ENCODE measurements at regions of chr6 and their contacts with region 1.

Region 1: GRCh38 chr6:118881440-118882313 is 12.3 kb upstream of the ASF1A start:
- DNase-seq: no peak
- ATAC-seq: no peak
- H3K4me3 ChIP-seq: no peak overlapping the region
- H3K27ac ChIP-seq: no peak overlapping the region
- H3K4me1 ChIP-seq: peaks cover 0 to 4% (median 0%) of the 10 kb centered on the region in 3 donors
- H3K27me3 ChIP-seq: no peaks in the 10 kb centered on the region
- CTCF ChIP-seq: no peak

Region 2: GRCh38 chr6:118660218-118660569 is 221.5 kb before region 1 on chr6:
- intact Hi-C with region 1: loop called in 1 of 3 experiments (anchors 10 kb)
- DNase-seq: peak in 1 of 6 donors; percentile 17
- ATAC-seq: no peak
- H3K4me3 ChIP-seq: no peak overlapping the region
- H3K27ac ChIP-seq: no peak overlapping the region
- H3K4me1 ChIP-seq: no peaks in the 10 kb centered on the region
- H3K27me3 ChIP-seq: no peaks in the 10 kb centered on the region
- CTCF ChIP-seq: no peak

Region 3: GRCh38 chr6:118939683-118940082 is 58.0 kb after region 1 on chr6:
- intact Hi-C with region 1: no loop called
- DNase-seq: no peak
- ATAC-seq: no peak
- H3K4me3 ChIP-seq: no peak overlapping the region
- H3K27ac ChIP-seq: no peak overlapping the region
- H3K4me1 ChIP-seq: peaks cover 0 to 8% (median 0%) of the 10 kb centered on the region in 3 donors
- H3K27me3 ChIP-seq: no peaks in the 10 kb centered on the region
- CTCF ChIP-seq: no peak

Measured in pancreas (tissue), 10 donors.